Astrocyte of the cerebellum (primary cell): ENCODE measurements at regions of chr16 and their contacts with region 1.

Region 1: GRCh38 chr16:53257001-53257400 is 177.3 kb upstream of the RBL2 start:
- DNase-seq: peak; percentile 9
- H3K4me3 ChIP-seq: no peak overlapping the region
- CTCF ChIP-seq: no peak

Region 2: DNA sequence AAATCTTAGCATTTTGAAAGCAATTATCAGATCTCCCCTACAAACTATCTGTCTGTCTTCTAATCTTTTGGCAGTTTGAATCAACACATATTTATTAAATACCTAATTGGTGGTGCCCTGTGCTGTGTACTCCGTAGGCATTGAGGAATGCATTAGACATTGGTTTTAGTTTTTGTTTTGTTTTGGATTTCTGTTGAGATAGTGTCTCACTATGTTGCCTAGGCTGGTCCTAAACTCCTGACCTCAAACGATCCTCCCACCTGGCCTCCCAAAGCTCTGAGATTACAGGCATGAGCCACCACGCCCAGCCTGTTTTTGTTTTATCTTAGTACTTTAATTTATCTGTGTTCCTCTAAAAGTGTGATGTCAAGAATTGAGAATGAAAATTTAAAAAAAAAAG is 52.5 kb after region 1 on chr16:
- in situ Hi-C with region 1: loop called (anchors 5 kb)
- DNase-seq: no peak
- H3K4me3 ChIP-seq: no peak overlapping the region
- CTCF ChIP-seq: no peak